ENCODE measurements at regions of chr9 and their contacts with region 1.

Region 1: GRCh38 chr9:133184962-133185361 is 21.2 kb upstream of the GBGT1 start:
- DNase-seq: no peak
- ATAC-seq: peak in 1 of 2 donors; percentile 36
- H3K4me3 ChIP-seq: no peak overlapping the region
- H3K27ac ChIP-seq: no peak overlapping the region
- H3K4me1 ChIP-seq: no peaks in the 10 kb centered on the region
- H3K27me3 ChIP-seq: peaks cover 3 to 7% (median 4%) of the 10 kb centered on the region in 3 donors
- CTCF ChIP-seq: peak in 4 of 5 experiments; percentile 25 to 49 (median 48)
- POLR2A ChIP-seq: no peak

Region 2: DNA sequence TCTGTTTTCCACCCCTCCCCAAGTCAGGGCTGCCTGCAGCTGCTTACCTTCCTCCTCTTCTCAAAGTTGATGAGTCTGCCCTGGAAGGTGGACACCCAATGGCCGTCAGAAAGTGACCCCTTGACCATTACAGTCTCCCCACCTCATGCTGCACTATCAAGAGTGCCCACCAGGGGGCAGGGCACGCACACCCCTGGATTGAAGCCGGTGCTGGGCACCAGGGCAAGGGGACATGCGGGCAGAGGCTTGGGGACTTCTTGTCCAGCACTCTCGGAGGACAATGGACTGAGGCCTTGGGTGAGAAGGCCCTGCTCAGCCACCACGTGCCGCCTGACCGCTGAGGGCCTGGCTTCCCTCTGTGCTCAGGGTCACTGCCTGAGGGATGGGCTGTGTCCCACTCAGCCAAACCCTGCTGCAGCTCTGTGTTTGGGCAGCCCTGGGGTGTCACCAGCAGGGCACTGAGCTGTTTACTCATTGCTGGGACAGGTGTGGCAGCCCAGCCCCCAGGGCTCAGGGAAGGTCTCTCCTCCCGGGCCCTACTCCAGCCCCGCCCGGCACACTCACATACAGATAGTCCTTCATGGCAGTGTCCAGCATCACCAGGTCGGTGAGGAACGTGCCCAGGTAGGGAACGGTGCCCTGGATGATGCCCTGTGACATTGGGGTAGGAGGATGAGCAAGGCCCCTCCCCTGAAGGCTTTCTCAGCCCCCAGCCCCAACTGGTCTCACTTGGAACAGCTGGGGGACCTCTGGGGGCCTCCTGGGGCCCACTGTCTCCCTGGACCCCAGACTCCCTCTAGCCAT is 81.6 kb before region 1 on chr9:
- in situ Hi-C with region 1: no loop called
- intact Hi-C with region 1: loop called (anchors 2 kb)
- DNase-seq: peak; percentile 63 to 78
- ATAC-seq: peak; percentile 76 to 91
- H3K4me3 ChIP-seq: no peak overlapping the region
- H3K27ac ChIP-seq: peak overlapping the region; percentile 52 to 77 (median 68)
- H3K4me1 ChIP-seq: peaks cover 10 to 16% of the 10 kb centered on the region in 2 donors
- H3K27me3 ChIP-seq: no peaks in the 10 kb centered on the region
- CTCF ChIP-seq: peak; percentile 98 to 100 (median 99)
- POLR2A ChIP-seq: no peak

Region 3: DNA sequence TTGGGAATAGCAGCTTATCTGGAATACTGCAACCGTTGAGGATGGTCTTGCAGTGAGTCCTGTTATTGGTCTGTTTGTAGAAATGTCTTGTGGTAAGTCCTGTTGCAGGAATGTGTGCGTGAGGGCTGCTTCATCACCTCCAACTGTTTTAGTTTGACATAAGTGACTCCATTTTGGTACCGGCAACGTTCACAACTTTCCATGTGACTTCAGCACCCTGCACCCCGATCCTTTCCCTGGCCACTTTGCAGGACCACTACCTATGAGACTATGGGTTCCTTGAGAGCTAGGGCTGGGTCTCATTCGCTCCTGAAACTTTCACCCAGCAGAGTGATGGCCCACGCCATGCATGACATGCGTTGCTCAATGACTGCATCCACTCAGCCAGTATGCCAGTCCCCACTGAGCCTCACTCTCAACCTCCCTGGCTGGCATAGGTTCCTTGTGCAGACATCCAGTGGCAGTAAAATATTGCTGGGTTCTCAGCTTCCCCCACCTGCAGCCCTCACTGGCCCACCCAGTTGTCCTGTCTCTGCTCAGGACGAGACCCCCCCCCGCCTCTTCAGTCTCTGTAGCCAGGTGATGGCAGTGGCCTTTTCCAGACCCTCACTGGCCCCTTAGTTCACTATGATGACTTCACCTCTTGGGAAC is 143.0 kb after region 1 on chr9:
- in situ Hi-C with region 1: no loop called
- intact Hi-C with region 1: loop called (anchors 2 kb)
- DNase-seq: no peak
- ATAC-seq: no peak
- H3K4me3 ChIP-seq: no peak overlapping the region
- H3K27ac ChIP-seq: no peak overlapping the region
- H3K4me1 ChIP-seq: no peaks in the 10 kb centered on the region
- H3K27me3 ChIP-seq: no peaks in the 10 kb centered on the region
- CTCF ChIP-seq: no peak
- POLR2A ChIP-seq: no peak

Region 4: DNA sequence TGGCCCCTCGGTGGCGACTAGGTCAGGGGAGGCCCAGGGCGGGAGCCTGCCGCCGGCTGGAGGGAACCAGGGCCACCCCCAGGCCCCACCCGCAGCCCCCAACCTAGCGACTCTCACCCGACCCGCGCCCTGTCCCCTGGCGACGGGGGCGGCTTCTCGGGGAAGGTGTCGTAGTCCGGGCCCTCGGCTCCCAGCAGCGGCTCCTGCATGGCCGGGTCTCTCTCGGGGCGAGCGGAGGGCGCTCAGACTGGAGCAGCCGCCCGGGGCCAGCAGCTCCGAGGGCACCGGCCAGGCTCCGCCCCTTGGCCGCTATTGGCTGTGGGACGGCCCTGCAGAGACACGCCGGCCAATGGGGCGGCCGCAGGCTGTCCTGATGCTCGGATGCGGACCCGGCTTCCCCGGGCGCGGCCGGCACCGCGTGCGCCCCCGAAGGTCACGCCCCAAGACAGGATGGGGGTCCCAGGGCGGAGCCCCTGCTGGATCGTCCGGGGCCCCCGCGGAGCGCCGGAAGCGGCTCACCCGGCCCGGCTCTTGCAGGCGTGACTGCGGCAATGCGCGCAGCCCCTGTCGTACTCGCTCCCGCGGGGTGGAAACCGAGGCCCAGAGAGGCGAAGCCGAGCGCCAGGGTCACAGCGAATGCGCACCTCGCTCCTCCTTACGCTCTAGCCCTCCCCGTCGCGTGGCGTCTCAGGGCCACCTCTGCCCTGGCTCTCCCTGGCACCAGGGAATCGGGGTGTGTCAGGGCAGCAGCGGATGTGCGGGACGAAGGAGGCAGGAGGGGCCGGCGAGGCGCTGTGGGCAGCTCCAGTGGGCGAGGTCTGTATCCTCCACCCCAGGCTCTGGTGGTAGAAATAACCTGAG is 294.1 kb after region 1 on chr9 and contains the start of gene SLC2A6:
- in situ Hi-C with region 1: loop called in 3 of 4 experiments (anchors 10 to 25 kb)
- intact Hi-C with region 1: no loop called
- DNase-seq: peak; percentile 67 to 77
- ATAC-seq: peak; percentile 90 to 92
- H3K4me3 ChIP-seq: peak within 1 kb of the TSS; percentile 56 to 69 (median 62)
- H3K27ac ChIP-seq: peak within 1 kb of the TSS; percentile 52 to 74 (median 68)
- H3K4me1 ChIP-seq: peaks cover 4 to 14% of the 10 kb centered on the region in 2 donors
- H3K27me3 ChIP-seq: no peaks in the 10 kb centered on the region
- CTCF ChIP-seq: no peak
- POLR2A ChIP-seq: peak; percentile 33 to 37
- total RNA-seq, gene SLC2A6: 0.41 to 2.4 (median 1.4) TPM